PC-9 (cell line): ENCODE measurements at regions of chr11 and their contacts with region 1.

Region 1: GRCh38 chr11:69928975-69929374 is 109.8 kb upstream of the FGF3 start:
- DNase-seq: no peak
- H3K4me3 ChIP-seq: no peak overlapping the region
- H3K27ac ChIP-seq: no peak overlapping the region
- H3K4me1 ChIP-seq: peaks cover 11% of the 10 kb centered on the region
- H3K27me3 ChIP-seq: no peaks in the 10 kb centered on the region
- CTCF ChIP-seq: no peak

Region 2: GRCh38 chr11:68978931-68979594 is 949.9 kb before region 1 on chr11:
- CTCF ChIA-PET with region 1: no interaction called
- POLR2A ChIA-PET with region 1: interaction called, 12 read pairs
- intact Hi-C with region 1: no loop called
- DNase-seq: no peak
- H3K4me3 ChIP-seq: no peak overlapping the region
- H3K27ac ChIP-seq: no peak overlapping the region
- H3K4me1 ChIP-seq: no peaks in the 10 kb centered on the region
- H3K27me3 ChIP-seq: peaks cover 6% of the 10 kb centered on the region
- CTCF ChIP-seq: no peak

Region 3: DNA sequence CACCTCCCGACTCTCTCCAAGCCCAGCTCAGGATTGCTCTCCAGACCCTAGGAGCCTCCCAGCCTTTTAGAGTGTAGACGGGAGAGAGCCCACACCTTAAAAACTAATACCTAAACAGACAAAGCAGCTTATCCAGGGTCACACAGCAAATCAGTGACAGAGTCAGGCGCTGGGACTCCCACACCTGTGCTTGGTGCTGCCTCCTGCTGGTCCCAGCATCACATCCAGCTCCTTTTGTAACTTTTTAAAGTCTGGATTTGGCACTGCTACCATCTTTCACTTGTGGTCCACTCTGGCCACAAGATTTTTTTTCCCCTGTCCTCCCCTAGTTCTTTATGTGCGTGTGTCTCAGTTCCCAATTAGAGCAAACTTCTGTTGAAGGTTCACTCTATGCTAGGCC is 153.9 kb after region 1 on chr11:
- CTCF ChIA-PET with region 1: no interaction called
- POLR2A ChIA-PET with region 1: no interaction called
- intact Hi-C with region 1: no loop called
- DNase-seq: no peak
- H3K4me3 ChIP-seq: no peak overlapping the region
- H3K27ac ChIP-seq: peak overlapping the region; percentile 31
- H3K4me1 ChIP-seq: peaks cover 56% of the 10 kb centered on the region
- H3K27me3 ChIP-seq: no peaks in the 10 kb centered on the region
- CTCF ChIP-seq: peak; percentile 44